A549 (cell line): ENCODE measurements at regions of chr16 and their contacts with region 1.

Region 1: DNA sequence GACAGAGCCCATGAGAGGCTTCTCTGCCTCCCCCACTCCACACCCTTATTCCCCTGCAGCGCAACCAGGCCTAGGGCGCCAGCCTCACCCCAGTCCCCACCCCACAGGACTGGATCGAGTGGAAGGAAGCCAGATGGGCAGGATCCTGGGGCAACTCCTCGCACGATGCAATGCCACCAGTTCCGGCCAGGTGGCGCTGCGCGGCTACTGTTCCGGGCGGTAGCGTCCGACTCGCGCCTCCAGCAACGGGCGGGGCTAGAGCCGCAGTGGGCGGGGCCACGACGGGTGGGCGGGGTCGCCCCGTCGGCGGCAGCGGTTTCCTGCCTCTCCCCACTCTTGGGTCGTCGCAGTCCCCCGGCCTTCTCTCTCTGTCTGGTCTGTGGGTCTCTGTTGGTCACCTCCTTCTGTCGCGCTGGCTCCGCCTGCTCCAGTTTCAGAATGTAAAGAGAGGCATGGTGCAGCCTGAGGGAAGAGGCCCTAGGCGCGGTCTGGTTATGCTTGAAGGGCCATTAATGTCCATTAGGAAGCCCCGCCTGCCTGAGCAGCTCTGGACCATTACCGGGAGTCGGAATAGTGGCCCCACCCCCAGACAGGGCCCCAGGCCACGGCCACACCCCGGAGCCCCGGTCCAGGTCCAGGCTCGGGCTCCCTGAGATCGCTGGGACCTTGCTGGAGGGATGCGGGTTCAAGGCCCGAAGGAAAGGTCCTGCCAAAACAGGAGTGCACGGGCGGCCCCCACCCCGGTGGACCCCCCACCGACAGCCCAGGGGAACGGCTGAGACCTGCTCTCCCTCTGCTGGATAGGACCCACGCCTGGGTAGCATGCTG is 3.4 kb upstream of the NHERF2 start:
- DNase-seq: peak; percentile 88 to 92
- ATAC-seq: peak; percentile 54 to 80
- H3K4me3 ChIP-seq: peak overlapping the region; percentile 34
- H3K27ac ChIP-seq: peak overlapping the region; percentile 89 to 97
- H3K4me1 ChIP-seq: peaks cover 31% of the 10 kb centered on the region
- CTCF ChIP-seq: peak; percentile 93
- EP300 ChIP-seq: no peak
- POLR2A ChIP-seq: peak; percentile 61
- RAD21 ChIP-seq: peak; percentile 94 to 97

Region 2: GRCh38 chr16:2009789-2010510 is 13.4 kb before region 1 on chr16 and contains the start of gene ZNF598:
- CTCF ChIA-PET with region 1: interaction called, 41 read pairs
- POLR2A ChIA-PET with region 1: no interaction called
- DNase-seq: peak; percentile 84 to 93
- ATAC-seq: peak; percentile 89 to 90
- H3K4me3 ChIP-seq: peak within 1 kb of the TSS; percentile 94
- H3K27ac ChIP-seq: peak within 1 kb of the TSS; percentile 95 to 98
- H3K4me1 ChIP-seq: peaks cover 53% of the 10 kb centered on the region
- CTCF ChIP-seq: no peak; the same call in 2 of the 3 replicates
- EP300 ChIP-seq: no peak
- POLR2A ChIP-seq: peak; percentile 81
- RAD21 ChIP-seq: no peak
- polyA plus RNA-seq, gene ZNF598: 15.3 and 17.7 TPM in 2 replicates

Region 3: GRCh38 chr16:2039274-2040031 is 16.1 kb after region 1 on chr16:
- CTCF ChIA-PET with region 1: interaction called, 25 read pairs
- POLR2A ChIA-PET with region 1: interaction called, 3 read pairs
- DNase-seq: peak; percentile 70 to 96
- ATAC-seq: peak; percentile 41 to 63; a peak in 5 of 6 replicates
- H3K4me3 ChIP-seq: no peak overlapping the region
- H3K27ac ChIP-seq: peak overlapping the region; percentile 90
- H3K4me1 ChIP-seq: peaks cover 96% of the 10 kb centered on the region
- CTCF ChIP-seq: no peak
- EP300 ChIP-seq: peak in 1 of 2 experiments; percentile 54; a peak in 1 of 5 replicates
- POLR2A ChIP-seq: no peak
- RAD21 ChIP-seq: no peak

Region 4: DNA sequence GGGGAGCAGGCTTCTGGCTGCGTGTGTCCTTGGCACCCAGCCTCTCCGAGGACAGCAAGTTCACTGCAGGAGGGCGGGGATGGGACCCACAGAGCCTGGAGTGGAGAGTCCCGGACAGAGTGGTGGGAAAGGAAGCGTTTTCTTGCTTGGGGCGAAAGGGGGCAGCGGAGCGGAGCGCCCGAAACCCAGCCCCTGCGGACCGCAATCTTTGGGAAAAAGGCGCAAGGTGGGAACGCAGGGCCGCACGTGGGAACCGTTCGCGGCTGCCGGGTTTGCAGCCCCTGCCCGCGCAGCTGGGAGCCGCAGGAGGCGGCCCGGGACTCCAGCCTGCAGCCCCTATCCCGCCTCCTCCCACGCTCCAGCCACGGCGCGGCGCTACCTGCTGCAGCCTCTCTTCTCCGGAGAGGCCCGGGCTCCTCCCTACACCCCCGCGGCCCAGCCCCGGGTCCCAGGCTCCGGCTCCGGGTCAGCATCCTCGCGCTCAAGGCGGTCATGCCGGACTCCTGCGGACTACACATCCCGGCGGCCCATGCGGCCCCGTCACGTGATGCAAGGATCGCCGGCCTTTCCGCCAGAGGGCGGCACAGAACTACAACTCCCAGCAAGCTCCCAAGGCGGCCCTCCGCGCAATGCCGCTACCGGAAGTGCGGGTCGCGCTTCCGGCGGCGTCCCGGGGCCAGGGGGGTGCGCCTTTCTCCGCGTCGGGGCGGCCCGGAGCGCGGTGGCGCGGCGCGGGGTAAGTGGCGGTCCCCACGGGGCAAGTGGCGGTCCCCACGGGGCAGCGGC is 24.2 kb after region 1 on chr16 and contains the starts of genes NTHL1 and TSC2:
- CTCF ChIA-PET with region 1: interaction called, 29 read pairs
- POLR2A ChIA-PET with region 1: no interaction called
- DNase-seq: peak; percentile 86 to 98
- ATAC-seq: peak; percentile 92 to 94
- H3K4me3 ChIP-seq: peak within 1 kb of the TSS; percentile 68
- H3K27ac ChIP-seq: peak within 1 kb of the TSS; percentile 79 to 91
- H3K4me1 ChIP-seq: peaks cover 35% of the 10 kb centered on the region
- CTCF ChIP-seq: peak; percentile 29; the same call in 1 of the 3 replicates
- EP300 ChIP-seq: no peak
- POLR2A ChIP-seq: peak; percentile 72
- RAD21 ChIP-seq: peak; percentile 10 to 15; a peak in 1 of 5 replicates
- polyA plus RNA-seq, gene NTHL1: 28.8 and 34.8 TPM in 2 replicates
- polyA plus RNA-seq, gene TSC2: 32.6 and 41.7 TPM in 2 replicates

Region 5: DNA sequence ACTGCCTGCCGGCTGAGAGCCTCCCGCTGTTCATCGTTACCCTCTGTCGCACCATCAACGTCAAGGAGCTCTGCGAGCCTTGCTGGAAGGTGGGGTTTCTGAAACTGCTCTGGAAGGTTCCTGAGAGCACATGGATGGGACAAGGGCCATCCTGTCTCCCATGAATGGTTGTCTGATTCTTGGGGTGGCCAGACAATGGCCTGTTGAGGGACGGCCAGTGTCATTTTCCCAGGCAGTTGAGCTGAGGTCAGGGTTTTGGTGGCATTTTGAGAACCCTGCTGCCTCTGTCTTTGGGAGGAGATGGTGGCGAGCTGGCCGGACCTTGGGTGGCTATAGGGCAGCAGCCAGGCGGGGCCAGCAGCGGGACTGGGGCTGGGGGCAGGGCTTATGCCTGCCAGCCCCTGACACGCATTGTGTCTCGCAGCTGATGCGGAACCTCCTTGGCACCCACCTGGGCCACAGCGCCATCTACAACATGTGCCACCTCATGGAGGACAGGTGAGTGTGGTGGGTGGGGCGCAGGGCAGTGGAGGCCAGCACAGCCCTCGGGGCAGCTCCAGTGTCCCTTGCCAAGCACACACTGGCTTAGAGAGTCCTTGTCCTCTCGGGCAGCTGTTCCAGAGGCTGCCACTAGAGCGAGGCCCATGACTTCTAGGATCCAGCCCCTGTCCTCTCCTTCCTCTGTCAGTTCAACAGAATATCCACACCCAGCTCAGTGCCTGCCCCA is 33.5 kb after region 1 on chr16:
- CTCF ChIA-PET with region 1: interaction called, 27 read pairs
- POLR2A ChIA-PET with region 1: no interaction called
- DNase-seq: peak in 1 of 2 experiments; percentile 56
- ATAC-seq: peak; percentile 88 to 91
- H3K4me3 ChIP-seq: no peak overlapping the region
- H3K27ac ChIP-seq: no peak overlapping the region
- H3K4me1 ChIP-seq: no peaks in the 10 kb centered on the region
- CTCF ChIP-seq: no peak
- EP300 ChIP-seq: no peak
- POLR2A ChIP-seq: no peak
- RAD21 ChIP-seq: 0 out of 5 replicates have a peak, but pooled peaks of 1 of the 2 experiments have one; percentile 9

Region 6: GRCh38 chr16:2147981-2148671 is 124.8 kb after region 1 on chr16 and contains the start of gene RAB26:
- CTCF ChIA-PET with region 1: interaction called, 23 read pairs
- POLR2A ChIA-PET with region 1: interaction called, 3 read pairs
- DNase-seq: peak; percentile 84 to 85
- ATAC-seq: peak; percentile 42 to 56
- H3K4me3 ChIP-seq: peak within 1 kb of the TSS; percentile 45
- H3K27ac ChIP-seq: peak within 1 kb of the TSS; percentile 92 to 94
- H3K4me1 ChIP-seq: peaks cover 53% of the 10 kb centered on the region
- CTCF ChIP-seq: no peak
- EP300 ChIP-seq: no peak
- POLR2A ChIP-seq: peak; percentile 33; the same call in 1 of the 2 replicates
- RAD21 ChIP-seq: 0 out of 5 replicates have a peak, but pooled peaks of 1 of the 2 experiments have one; percentile 17
- polyA plus RNA-seq, gene RAB26: 6.7 and 7.5 TPM in 2 replicates